GM12878 (cell line): ENCODE measurements at regions of chr4 and their contacts with region 1.

Region 1: DNA sequence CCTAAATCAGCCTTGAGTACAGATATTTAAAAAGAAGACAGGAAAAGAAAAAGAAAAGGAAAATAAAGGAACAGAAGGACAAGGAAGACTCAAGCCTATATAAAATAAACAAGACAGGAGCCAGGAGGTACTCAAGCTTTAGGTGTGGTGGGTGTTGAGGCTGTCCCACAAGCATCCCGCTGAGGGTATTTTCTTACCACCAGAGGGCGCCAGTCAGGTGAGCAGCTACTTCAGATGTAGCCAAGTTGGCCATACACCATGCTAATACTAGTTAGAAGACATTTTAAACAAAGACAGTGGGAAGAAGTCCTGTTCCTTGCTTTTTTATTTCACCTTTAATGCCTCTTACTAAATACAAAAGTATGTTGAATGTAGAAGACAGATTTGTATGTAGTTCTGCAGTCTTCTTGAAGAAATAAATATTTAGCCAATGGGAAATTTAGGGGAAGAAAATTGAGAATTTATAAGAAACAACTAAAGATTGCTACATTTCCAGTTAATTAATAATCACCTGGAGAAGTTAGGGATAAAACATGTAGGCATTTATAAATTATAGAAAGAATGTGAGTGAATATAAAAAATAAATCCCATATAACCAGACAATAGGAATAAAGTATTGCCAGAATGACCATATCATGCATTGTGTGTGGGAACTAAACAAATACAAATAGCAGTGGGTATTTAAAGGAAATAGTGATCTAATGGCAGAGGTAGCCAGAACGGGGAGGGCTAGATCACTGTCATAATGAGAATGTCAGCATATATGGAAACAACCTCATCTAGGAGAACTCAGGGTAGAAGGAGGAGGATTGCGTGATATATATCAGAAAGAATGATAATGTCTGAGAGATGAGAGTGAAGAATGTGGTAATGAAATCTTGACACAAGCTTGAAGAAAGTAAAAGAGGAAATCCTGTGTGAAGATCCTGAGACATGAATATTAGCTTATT is 71.0 kb downstream of the MTHFD2L start:
- DNase-seq: no peak
- ATAC-seq: peak; percentile 100
- H3K4me3 ChIP-seq: no peak overlapping the region
- H3K27ac ChIP-seq: no peak overlapping the region
- H3K4me1 ChIP-seq: peaks cover 6% of the 10 kb centered on the region; the same call in 1 of the 2 replicates
- H3K27me3 ChIP-seq: no peaks in the 10 kb centered on the region
- CTCF ChIP-seq: peak; percentile 73 to 85 (median 85)
- EP300 ChIP-seq: no peak
- POLR2A ChIP-seq: no peak
- RAD21 ChIP-seq: peak; percentile 65

Region 2: DNA sequence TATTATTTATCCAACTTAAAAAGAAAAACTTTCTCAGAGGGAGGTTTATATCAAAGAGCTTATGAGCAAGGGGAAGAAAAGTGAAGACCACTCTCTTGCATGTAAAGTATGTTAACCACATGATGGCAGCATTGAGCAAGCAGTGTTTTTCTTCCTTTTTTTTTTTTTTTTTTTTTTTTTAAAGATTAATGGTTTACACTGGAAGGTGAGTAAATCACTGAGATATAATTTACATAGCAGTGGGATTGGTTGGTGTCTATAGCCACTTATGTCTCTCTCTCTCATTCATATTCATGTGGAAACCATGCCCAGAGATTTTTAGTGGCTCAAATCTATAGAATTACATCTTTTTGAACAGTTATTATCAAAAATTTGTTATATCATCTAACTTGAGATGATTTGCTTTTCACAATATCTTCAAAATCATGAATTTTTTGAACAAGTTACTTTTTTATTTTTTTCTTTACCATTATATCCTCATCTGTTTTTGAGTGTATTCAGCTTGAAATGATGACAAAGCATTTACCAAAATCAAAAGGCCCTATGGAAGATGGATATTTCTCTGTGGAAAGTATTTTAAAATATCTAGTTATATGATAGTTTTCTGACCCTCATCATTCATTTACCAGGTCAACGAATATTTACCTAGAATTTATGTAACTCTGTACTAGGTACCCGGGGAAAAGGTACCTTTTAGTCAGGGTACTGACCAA is 39.5 kb before region 1 on chr4:
- CTCF ChIA-PET with region 1: interaction called, 67 read pairs
- POLR2A ChIA-PET with region 1: interaction called, 3 read pairs
- RAD21 ChIA-PET with region 1: interaction called, 39 read pairs
- SMC1A ChIA-PET with region 1: interaction called, 40 read pairs
- in situ Hi-C with region 1: no loop called
- intact Hi-C with region 1: loop called (anchors 2 kb)
- DNase-seq: peak; percentile 25
- ATAC-seq: peak; percentile 90
- H3K4me3 ChIP-seq: no peak overlapping the region
- H3K27ac ChIP-seq: no peak overlapping the region
- H3K4me1 ChIP-seq: no peaks in the 10 kb centered on the region
- H3K27me3 ChIP-seq: no peaks in the 10 kb centered on the region
- CTCF ChIP-seq: peak; percentile 58 to 62 (median 59); a peak in 5 of 6 replicates
- EP300 ChIP-seq: no peak
- POLR2A ChIP-seq: no peak
- RAD21 ChIP-seq: peak; percentile 89

Region 3: DNA sequence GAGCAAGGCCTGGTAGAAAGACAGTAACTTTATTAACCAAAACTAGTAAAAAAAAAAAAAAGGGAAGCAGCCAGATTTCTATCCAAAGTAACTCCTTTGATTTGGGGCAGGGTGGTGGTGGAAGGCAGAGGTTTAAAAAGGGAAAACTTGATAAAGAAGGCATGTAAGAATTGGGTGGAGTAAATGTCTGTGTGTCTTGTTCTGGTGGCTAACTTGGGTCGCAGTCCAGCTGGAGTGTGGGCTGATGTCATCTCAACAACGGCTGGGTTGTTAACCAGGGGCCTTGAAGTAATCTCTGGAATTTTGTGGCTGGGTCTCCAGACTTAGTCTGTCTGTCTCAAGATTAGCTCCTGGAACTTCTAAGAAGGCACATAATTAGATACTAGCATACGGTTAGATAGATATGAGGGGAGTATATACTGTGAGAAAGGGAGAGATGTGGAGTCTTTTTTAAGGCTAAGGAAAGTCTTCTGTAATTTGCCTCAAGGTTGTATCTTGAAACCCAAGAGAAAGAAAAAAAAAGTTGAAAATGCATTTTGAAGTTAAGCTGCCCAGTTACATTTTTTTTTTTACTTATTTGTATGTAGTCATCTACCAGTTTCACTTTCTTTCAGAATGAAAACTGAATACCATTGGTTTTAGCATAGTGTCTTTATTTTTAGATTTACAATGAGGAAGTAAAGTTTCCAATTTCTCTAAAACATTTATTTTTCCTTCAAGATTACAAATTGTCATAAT is 22.7 kb before region 1 on chr4:
- CTCF ChIA-PET with region 1: interaction called, 27 read pairs
- POLR2A ChIA-PET with region 1: no interaction called
- RAD21 ChIA-PET with region 1: interaction called, 3 read pairs
- SMC1A ChIA-PET with region 1: interaction called, 5 read pairs
- in situ Hi-C with region 1: no loop called
- intact Hi-C with region 1: no loop called
- DNase-seq: peak; percentile 46
- ATAC-seq: peak; percentile 83
- H3K4me3 ChIP-seq: peak overlapping the region; percentile 51; the same call in 1 of the 2 replicates
- H3K27ac ChIP-seq: peak overlapping the region; percentile 98
- H3K4me1 ChIP-seq: peaks cover 32% of the 10 kb centered on the region
- H3K27me3 ChIP-seq: no peaks in the 10 kb centered on the region
- CTCF ChIP-seq: no peak
- EP300 ChIP-seq: no peak
- POLR2A ChIP-seq: no peak
- RAD21 ChIP-seq: no peak

Region 4: DNA sequence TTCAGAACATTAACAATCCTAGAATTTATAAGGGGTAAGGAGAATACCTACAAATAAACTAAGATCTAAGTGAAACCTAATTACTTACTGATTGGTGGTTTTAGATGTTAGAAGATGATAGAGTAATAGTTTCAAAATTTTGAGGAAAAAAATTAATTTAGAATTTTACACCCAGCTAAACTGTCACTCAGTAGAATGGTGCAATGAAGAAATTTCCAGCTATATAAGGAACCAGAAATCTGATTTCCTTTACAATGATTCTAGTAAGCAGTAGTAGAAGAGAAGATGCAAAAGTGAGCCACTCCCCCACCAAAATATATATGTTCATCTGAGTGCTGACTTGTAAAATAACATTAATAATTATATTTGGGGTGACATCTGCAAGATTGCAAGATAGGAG is 24.0 kb after region 1 on chr4:
- CTCF ChIA-PET with region 1: interaction called, 12 read pairs
- POLR2A ChIA-PET with region 1: no interaction called
- RAD21 ChIA-PET with region 1: interaction called, 3 read pairs
- SMC1A ChIA-PET with region 1: interaction called, 3 read pairs
- in situ Hi-C with region 1: no loop called
- intact Hi-C with region 1: no loop called
- DNase-seq: no peak
- ATAC-seq: no peak
- H3K4me3 ChIP-seq: no peak overlapping the region
- H3K27ac ChIP-seq: no peak overlapping the region
- H3K4me1 ChIP-seq: no peaks in the 10 kb centered on the region
- H3K27me3 ChIP-seq: no peaks in the 10 kb centered on the region
- CTCF ChIP-seq: no peak
- EP300 ChIP-seq: no peak
- POLR2A ChIP-seq: no peak
- RAD21 ChIP-seq: no peak

Region 5: GRCh38 chr4:74311696-74312313 is 82.8 kb after region 1 on chr4:
- CTCF ChIA-PET with region 1: interaction called, 31 read pairs
- POLR2A ChIA-PET with region 1: no interaction called
- RAD21 ChIA-PET with region 1: interaction called, 6 read pairs
- SMC1A ChIA-PET with region 1: interaction called, 21 read pairs
- in situ Hi-C with region 1: no loop called
- intact Hi-C with region 1: loop called (anchors 1 kb)
- DNase-seq: peak; percentile 13
- ATAC-seq: peak; percentile 77
- H3K4me3 ChIP-seq: no peak overlapping the region
- H3K27ac ChIP-seq: no peak overlapping the region
- H3K4me1 ChIP-seq: peaks cover 9% of the 10 kb centered on the region
- H3K27me3 ChIP-seq: no peaks in the 10 kb centered on the region
- CTCF ChIP-seq: peak; percentile 39 to 76 (median 68); a peak in 5 of 6 replicates
- EP300 ChIP-seq: no peak
- POLR2A ChIP-seq: no peak
- RAD21 ChIP-seq: peak; percentile 84

Region 6: GRCh38 chr4:74675673-74676279 is 446.8 kb after region 1 on chr4:
- CTCF ChIA-PET with region 1: interaction called, 20 read pairs
- POLR2A ChIA-PET with region 1: no interaction called
- RAD21 ChIA-PET with region 1: interaction called, 4 read pairs
- SMC1A ChIA-PET with region 1: interaction called, 19 read pairs
- in situ Hi-C with region 1: no loop called
- intact Hi-C with region 1: loop called (anchors 2 kb)
- DNase-seq: no peak
- ATAC-seq: peak; percentile 93
- H3K4me3 ChIP-seq: no peak overlapping the region
- H3K27ac ChIP-seq: no peak overlapping the region
- H3K4me1 ChIP-seq: no peaks in the 10 kb centered on the region
- H3K27me3 ChIP-seq: no peaks in the 10 kb centered on the region
- CTCF ChIP-seq: peak; percentile 70 to 76 (median 71)
- EP300 ChIP-seq: no peak
- POLR2A ChIP-seq: no peak
- RAD21 ChIP-seq: peak; percentile 79